Right ventricle myocardium inferior (tissue), 1 donor: ENCODE measurements at regions of chr1 and their contacts with region 1.

Region 1: DNA sequence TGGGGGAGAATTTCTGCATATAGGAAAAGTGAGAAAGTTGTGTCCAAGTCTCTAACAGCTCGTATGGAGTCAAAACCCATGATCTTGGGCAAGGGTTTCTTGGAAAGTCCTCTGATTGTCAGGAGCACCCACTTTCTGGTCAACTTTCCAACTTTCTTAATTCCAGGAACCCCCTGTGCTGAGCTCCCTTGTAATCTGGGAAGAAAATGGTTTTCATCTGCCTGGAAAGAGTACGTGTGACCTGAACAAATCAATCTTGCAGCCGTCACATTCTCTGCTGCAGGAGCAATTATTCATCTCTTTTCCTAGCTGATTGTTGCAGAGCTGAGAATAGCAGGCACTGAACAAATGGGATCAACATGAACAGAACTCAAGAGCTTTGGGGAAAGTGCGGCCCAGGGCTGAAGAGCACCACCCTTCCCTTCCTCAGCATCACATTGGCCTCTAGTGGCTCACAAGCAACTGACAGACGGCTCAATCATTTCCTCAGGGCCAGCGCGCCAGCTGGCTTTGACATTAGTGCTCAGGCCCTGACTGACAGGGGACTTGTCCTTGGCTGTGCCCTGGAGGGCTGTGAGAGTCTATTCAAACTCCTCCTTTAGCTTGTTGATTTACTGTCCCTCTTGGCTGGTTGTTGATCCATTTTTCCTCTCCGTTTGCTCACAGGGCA is 295.2 kb downstream of the HLX start:
- DNase-seq: peak; percentile 87
- ATAC-seq: peak; percentile 99

Region 2: GRCh38 chr1:220908757-220909156 is 265.7 kb before region 1 on chr1:
- intact Hi-C with region 1: loop called (anchors 1 kb)
- DNase-seq: no peak
- ATAC-seq: no peak

Region 3: GRCh38 chr1:220999872-221000863 is 174.3 kb before region 1 on chr1:
- intact Hi-C with region 1: loop called (anchors 10 kb)
- DNase-seq: no peak
- ATAC-seq: peak; percentile 68

Region 4: GRCh38 chr1:221045842-221046831 is 128.3 kb before region 1 on chr1:
- intact Hi-C with region 1: no loop called
- DNase-seq: no peak
- ATAC-seq: peak; percentile 67